ENCODE measurements at regions of chr5 and their contacts with region 1.

Region 1: DNA sequence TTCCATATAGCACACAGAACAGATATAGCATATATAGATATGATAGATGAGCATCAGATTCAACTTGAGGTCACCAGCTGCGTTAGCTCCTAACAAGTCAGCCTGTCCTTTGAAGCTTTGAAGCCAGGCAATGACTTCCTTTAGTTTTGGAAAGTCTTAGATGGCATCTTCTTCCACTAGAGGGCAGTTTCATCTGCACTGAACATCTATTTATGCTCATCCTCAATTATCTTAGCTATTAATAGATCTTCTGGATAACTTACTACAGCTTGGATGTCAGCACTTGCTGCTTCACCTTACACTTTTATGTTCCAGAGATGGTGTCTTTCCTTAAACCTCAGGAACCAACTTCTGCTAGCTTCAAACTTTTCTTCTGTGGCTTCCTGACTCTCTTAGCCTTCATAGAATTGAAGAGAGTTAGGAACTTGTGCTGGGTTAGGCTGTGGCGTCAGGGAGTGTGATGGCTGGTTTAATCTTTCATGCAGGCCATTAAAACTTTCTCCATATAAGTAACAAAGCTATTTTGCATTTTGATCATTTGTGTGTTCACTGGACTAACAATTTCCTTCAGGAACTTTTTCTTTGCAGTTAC is 1401.4 kb downstream of the EFNA5 start:
- DNase-seq: no peak
- ATAC-seq: no peak
- H3K4me3 ChIP-seq: no peak overlapping the region
- H3K27ac ChIP-seq: no peak overlapping the region
- H3K4me1 ChIP-seq: no peaks in the 10 kb centered on the region
- H3K27me3 ChIP-seq: no peaks in the 10 kb centered on the region

Region 2: DNA sequence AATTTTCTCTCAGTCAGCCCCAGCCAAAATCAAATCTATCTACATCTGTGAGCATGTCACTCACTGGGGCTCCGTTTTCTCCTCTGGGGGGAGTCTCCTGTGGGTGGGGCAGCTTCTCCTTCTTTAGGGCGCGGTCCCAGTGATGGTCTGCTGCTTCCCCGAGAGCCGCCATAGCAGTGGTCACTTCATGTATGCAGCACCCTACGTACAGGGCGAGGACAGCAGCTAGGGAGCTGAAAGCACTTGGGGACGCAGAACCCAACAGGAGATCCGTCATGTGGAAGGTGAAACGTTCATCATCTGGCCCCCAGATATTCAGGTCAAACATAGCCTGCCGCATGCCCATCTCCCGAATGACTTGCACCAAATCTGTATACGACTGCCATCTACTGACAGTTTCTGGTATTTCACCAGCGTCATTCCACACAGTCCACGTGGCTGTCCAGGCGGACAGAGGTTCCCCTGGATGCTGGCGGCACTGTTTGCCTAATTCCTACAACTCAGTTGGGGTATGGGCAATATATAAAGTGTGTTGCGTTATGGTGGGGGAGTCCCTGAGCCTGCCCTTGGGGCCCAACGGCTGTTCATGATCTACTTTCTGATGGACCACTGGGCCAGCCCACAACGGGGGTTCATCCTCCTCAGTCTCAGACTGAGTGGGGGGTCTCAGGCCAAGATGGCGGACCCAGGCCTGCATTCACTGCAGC is 606.4 kb after region 1 on chr5:
- intact Hi-C with region 1: loop called in 1 of 4 experiments (anchors 10 kb)
- DNase-seq: peak in 1 of 3 donors; percentile 33
- ATAC-seq: peak; percentile 24 to 59
- H3K4me3 ChIP-seq: no peak overlapping the region
- H3K27ac ChIP-seq: no peak overlapping the region
- H3K4me1 ChIP-seq: no peaks in the 10 kb centered on the region
- H3K27me3 ChIP-seq: no peaks in the 10 kb centered on the region

Measured in right cardiac atrium (tissue), 5 donors.